ENCODE measurements at regions of chr21 and their contacts with region 1.

Region 1: GRCh38 chr21:25881525-25882376 is 147.0 kb downstream of the GABPA start:
- ATAC-seq: peak in 6 of 8 experiments; percentile 5 to 68 (median 50)
- H3K4me3 ChIP-seq: no peak overlapping the region
- H3K27ac ChIP-seq: no peak overlapping the region
- H3K4me1 ChIP-seq: peaks cover 0 to 2% of the 10 kb centered on the region in 2 donors

Region 2: GRCh38 chr21:25385911-25386474 is 495.8 kb before region 1 on chr21:
- in situ Hi-C with region 1: no loop called
- ATAC-seq: peak in 6 of 8 experiments; percentile 46 to 79 (median 54)
- H3K4me3 ChIP-seq: no peak overlapping the region
- H3K27ac ChIP-seq: no peak overlapping the region
- H3K4me1 ChIP-seq: no peaks in the 10 kb centered on the region

Region 3: GRCh38 chr21:25790122-25790877 is 91.5 kb before region 1 on chr21:
- in situ Hi-C with region 1: no loop called
- ATAC-seq: peak; percentile 66 to 92 (median 83)
- H3K4me3 ChIP-seq: no peak overlapping the region
- H3K27ac ChIP-seq: no peak overlapping the region
- H3K4me1 ChIP-seq: peaks cover 0 to 7% of the 10 kb centered on the region in 2 donors

Region 4: GRCh38 chr21:26170471-26171257 is 288.9 kb after region 1 on chr21 and contains the start of gene APP:
- in situ Hi-C with region 1: loop called in 1 of 9 experiments (anchors 25 kb)
- ATAC-seq: peak; percentile 62 to 85 (median 80)
- H3K4me3 ChIP-seq: peak within 1 kb of the TSS; percentile 66 to 94 (median 86)
- H3K27ac ChIP-seq: peak within 1 kb of the TSS; percentile 86
- H3K4me1 ChIP-seq: peaks cover 14 to 18% of the 10 kb centered on the region in 2 donors
- total RNA-seq, gene APP: 252 to 1,066 (median 518) TPM